ENCODE measurements at regions of chr14 and their contacts with region 1.

Region 1: DNA sequence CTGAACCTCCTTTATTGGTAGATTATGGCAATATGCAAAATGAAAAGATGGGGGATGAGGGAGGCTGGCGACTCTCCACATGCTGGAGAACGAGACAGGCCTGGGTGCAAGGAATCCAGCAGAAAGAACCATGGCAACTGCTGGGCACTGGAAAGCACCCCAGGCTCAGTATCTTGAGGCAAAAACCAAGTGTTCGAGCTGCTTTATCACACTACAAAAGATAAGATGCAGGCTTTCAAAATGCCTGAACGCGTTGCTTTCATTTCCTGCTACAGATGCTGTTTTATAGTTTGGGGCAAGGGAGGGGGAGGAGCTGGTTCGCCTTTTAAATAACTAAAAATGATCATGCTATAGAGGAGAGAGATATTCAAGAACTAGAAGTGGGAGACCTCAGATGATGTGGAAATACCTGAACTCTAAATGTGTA is 38.9 kb downstream of the NIN start:
- DNase-seq: no peak
- H3K4me3 Mint-ChIP-seq: peak overlapping the region; percentile 35
- H3K27ac Mint-ChIP-seq: peak overlapping the region; percentile 64
- H3K4me1 Mint-ChIP-seq: peaks cover 42% of the 10 kb centered on the region
- H3K27me3 Mint-ChIP-seq: no peaks in the 10 kb centered on the region

Region 2: GRCh38 chr14:49950275-49951228 is 841.5 kb before region 1 on chr14:
- intact Hi-C with region 1: no loop called
- DNase-seq: no peak
- H3K4me3 Mint-ChIP-seq: no peak overlapping the region
- H3K27ac Mint-ChIP-seq: peak overlapping the region; percentile 34
- H3K4me1 Mint-ChIP-seq: peaks cover 45% of the 10 kb centered on the region
- H3K27me3 Mint-ChIP-seq: no peaks in the 10 kb centered on the region

Region 3: GRCh38 chr14:50756300-50756699 is 35.8 kb before region 1 on chr14:
- intact Hi-C with region 1: no loop called
- DNase-seq: no peak
- H3K4me3 Mint-ChIP-seq: no peak overlapping the region
- H3K27ac Mint-ChIP-seq: no peak overlapping the region
- H3K4me1 Mint-ChIP-seq: peaks cover 2% of the 10 kb centered on the region
- H3K27me3 Mint-ChIP-seq: no peaks in the 10 kb centered on the region

Region 4: DNA sequence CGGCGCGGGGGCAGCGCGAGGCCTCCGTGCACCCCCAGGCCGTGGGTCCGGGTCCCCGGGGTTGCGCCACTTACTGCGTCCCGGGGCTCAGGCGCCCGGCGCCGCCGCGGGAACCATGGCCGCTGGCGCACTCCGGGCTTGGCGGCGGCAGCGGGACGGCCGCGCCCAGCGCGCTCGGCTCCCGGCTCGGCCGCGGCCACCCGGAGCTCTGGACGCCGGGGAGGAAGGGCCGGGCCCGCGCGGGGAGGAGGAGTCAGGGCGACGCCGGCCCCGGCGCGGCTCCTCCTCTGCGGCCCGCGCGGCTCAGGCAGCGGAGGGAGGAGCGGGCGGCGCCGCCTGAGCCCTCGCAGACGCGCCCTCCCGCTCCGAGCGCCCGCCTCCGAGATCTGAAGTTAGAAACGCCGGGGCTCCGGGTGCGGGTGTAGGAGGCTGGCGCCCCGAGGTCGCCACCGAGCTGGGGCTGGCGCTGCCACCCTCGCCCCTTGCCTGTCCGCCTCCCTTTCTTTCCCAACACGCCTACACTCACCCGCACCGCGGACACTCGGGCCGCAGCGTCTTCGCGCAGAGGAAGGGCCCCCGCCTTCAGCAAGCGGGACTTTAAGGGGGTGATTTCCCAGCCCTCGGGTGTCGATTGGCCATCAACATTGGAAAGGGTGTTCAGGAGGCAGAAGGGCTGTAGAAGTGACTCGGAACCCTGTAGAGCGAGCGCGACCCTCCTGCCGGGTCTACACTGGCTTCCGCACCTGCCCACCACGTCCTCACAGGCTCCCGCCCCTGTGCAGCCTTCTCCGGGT is 39.1 kb after region 1 on chr14 and contains the start of gene NIN:
- intact Hi-C with region 1: loop called (anchors 1 kb)
- DNase-seq: peak; percentile 68
- H3K4me3 Mint-ChIP-seq: peak within 1 kb of the TSS; percentile 91
- H3K27ac Mint-ChIP-seq: peak within 1 kb of the TSS; percentile 87
- H3K4me1 Mint-ChIP-seq: peaks cover 47% of the 10 kb centered on the region
- H3K27me3 Mint-ChIP-seq: peaks cover 13% of the 10 kb centered on the region
- total RNA-seq, gene NIN: 43.0 and 45.1 TPM in 2 replicates

Measured in activated T-helper 2 cell treated with anti-CD3 and anti-CD28 coated beads, Interferon-gamma antibody, Interleukin-2, Interleukin-4, amounts not matched to agents 10 μg/mL and 5 μg/mL and 100 μg/mL, durations not matched to agents 14 hours and 24 hours and 36 hours (primary cell).